ENCODE measurements at regions of chr4 and their contacts with region 1.

Region 1: GRCh38 chr4:152735396-152735859 is 44.1 kb downstream of the TIGD4 start:
- DNase-seq: peak; percentile 64
- ATAC-seq: peak; percentile 57
- H3K4me3 ChIP-seq: no peak overlapping the region
- H3K4me3 Mint-ChIP-seq: no peak overlapping the region
- H3K27ac ChIP-seq: no peak overlapping the region
- H3K27ac Mint-ChIP-seq: no peak overlapping the region
- H3K4me1 ChIP-seq: peaks cover 5 to 12% of the 10 kb centered on the region in 2 donors
- H3K4me1 Mint-ChIP-seq: peaks cover 16% of the 10 kb centered on the region
- H3K27me3 ChIP-seq: no peaks in the 10 kb centered on the region
- H3K27me3 Mint-ChIP-seq: no peaks in the 10 kb centered on the region
- CTCF ChIP-seq: peak; percentile 80

Region 2: GRCh38 chr4:152408514-152409327 is 326.7 kb before region 1 on chr4:
- CTCF ChIA-PET with region 1: interaction called, 29 read pairs
- POLR2A ChIA-PET with region 1: no interaction called
- intact Hi-C with region 1: loop called (anchors 1 kb)
- DNase-seq: peak; percentile 59
- ATAC-seq: no peak
- H3K4me3 ChIP-seq: no peak overlapping the region
- H3K4me3 Mint-ChIP-seq: no peak overlapping the region
- H3K27ac ChIP-seq: no peak overlapping the region
- H3K27ac Mint-ChIP-seq: no peak overlapping the region
- H3K4me1 ChIP-seq: no peaks in the 10 kb centered on the region
- H3K4me1 Mint-ChIP-seq: peaks cover 4% of the 10 kb centered on the region
- H3K27me3 ChIP-seq: no peaks in the 10 kb centered on the region
- H3K27me3 Mint-ChIP-seq: no peaks in the 10 kb centered on the region
- CTCF ChIP-seq: peak; percentile 71

Region 3: DNA sequence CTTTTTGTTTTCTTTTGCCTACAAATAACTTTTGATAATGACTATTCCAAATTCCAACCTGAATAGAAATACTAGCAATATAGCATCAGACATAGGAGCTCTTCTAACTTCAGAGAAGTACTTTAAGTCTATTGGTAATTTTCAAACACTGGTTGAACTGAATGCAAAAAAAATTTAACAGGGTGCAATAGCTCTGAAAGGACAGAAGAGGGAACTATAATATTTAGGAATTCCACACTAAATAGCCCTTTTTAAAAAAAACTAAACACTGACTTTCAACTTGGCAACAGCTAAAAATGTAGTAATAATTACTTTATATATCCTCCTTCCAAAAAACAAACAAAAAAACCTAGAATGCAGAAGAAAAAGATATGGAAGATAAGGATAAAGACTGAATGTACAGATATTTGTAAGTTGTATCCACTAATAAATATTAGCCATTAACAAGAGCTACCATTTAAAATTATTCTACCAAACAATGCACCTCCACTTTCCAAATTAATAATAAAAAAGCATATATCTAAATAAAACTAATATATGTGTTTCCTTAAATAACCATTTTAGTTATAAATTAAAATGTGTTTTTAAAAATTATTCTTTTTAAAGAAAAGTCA is 280.9 kb before region 1 on chr4:
- CTCF ChIA-PET with region 1: interaction called, 24 read pairs
- POLR2A ChIA-PET with region 1: no interaction called
- intact Hi-C with region 1: loop called (anchors 1 kb)
- DNase-seq: peak; percentile 37
- ATAC-seq: no peak
- H3K4me3 ChIP-seq: no peak overlapping the region
- H3K4me3 Mint-ChIP-seq: no peak overlapping the region
- H3K27ac ChIP-seq: no peak overlapping the region
- H3K27ac Mint-ChIP-seq: no peak overlapping the region
- H3K4me1 ChIP-seq: peaks cover 23 to 27% of the 10 kb centered on the region in 2 donors
- H3K4me1 Mint-ChIP-seq: peaks cover 50% of the 10 kb centered on the region
- H3K27me3 ChIP-seq: no peaks in the 10 kb centered on the region
- H3K27me3 Mint-ChIP-seq: no peaks in the 10 kb centered on the region
- CTCF ChIP-seq: peak; percentile 77

Region 4: DNA sequence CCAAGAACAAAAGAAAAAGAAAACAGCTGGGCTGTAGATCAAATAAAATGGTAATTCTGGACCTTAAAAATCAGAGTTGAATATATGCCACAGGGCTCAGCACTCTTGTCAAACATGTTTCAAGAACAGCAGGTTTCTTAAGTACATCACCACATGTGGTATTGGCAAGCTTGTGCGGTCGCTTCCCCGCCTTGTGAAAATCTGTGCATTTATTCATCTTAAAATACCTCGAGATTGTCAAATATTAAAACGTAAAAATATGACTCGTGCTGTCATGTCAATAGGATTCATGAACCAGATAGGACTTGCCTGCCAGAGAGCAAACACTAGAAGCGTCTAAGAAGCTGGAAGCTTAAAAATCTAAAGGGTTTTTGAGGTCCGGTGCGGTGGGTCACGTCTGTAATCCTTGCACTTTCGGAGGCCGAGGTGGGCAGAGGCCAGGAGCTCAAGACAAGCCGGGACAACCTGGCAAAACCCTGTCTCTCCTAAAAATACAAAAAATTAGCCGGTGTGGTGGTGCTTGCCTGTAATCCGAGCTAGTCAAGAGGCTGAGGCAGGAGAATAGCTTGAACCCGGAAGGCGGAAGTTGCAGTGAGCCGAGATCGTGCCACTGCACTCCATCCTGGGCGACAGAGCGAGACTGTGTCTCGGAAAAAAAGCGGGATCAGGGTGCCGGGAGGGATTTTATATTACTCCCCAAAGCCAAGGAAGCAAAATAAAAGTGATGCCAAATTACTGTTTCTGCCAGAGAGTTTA is 15.4 kb before region 1 on chr4:
- CTCF ChIA-PET with region 1: interaction called, 12 read pairs
- POLR2A ChIA-PET with region 1: no interaction called
- intact Hi-C with region 1: no loop called
- DNase-seq: no peak
- ATAC-seq: no peak
- H3K4me3 ChIP-seq: no peak overlapping the region
- H3K4me3 Mint-ChIP-seq: no peak overlapping the region
- H3K27ac ChIP-seq: no peak overlapping the region
- H3K27ac Mint-ChIP-seq: no peak overlapping the region
- H3K4me1 ChIP-seq: peaks cover 0 to under 1% of the 10 kb centered on the region in 2 donors
- H3K4me1 Mint-ChIP-seq: peaks cover 8% of the 10 kb centered on the region
- H3K27me3 ChIP-seq: peaks cover 0 to 3% (median 0%) of the 10 kb centered on the region in 4 experiments
- H3K27me3 Mint-ChIP-seq: no peaks in the 10 kb centered on the region
- CTCF ChIP-seq: no peak

Region 5: DNA sequence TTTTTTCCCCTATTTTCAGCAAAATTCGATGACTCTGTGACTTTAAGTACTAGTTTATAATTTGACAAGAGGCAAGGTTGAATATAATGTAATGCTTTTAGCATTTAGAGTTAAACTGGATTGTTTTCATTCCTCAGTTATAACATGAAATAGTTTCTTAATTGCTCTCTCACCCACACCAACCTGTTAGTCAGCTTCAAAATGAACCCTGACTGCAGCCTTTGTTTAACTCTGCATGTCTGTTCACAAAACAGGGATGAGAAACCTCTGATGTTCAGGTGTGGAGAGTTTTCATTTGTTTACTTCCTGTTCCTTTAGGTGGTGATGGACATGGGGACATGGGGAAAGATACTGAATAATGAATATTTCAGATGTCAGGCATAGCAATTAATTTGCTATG is 559.2 kb after region 1 on chr4:
- CTCF ChIA-PET with region 1: no interaction called
- POLR2A ChIA-PET with region 1: no interaction called
- intact Hi-C with region 1: no loop called
- DNase-seq: no peak
- ATAC-seq: no peak
- H3K4me3 ChIP-seq: no peak overlapping the region
- H3K4me3 Mint-ChIP-seq: no peak overlapping the region
- H3K27ac ChIP-seq: no peak overlapping the region
- H3K27ac Mint-ChIP-seq: no peak overlapping the region
- H3K4me1 ChIP-seq: no peaks in the 10 kb centered on the region
- H3K4me1 Mint-ChIP-seq: no peaks in the 10 kb centered on the region
- H3K27me3 ChIP-seq: no peaks in the 10 kb centered on the region
- H3K27me3 Mint-ChIP-seq: no peaks in the 10 kb centered on the region
- CTCF ChIP-seq: no peak